ENCODE measurements at regions of chr1 and their contacts with region 1.

Region 1: GRCh38 chr1:27111626-27112573 is 43.0 kb downstream of the SLC9A1 start:
- DNase-seq: peak; percentile 47 to 78 (median 71)
- ATAC-seq: peak; percentile 95
- H3K4me3 ChIP-seq: peak overlapping the region; percentile 9
- H3K4me3 Mint-ChIP-seq: peak overlapping the region; percentile 53 to 78 (median 71)
- H3K27ac ChIP-seq: peak overlapping the region; percentile 65
- H3K27ac Mint-ChIP-seq: peak overlapping the region; percentile 77 to 97 (median 87)
- H3K4me1 ChIP-seq: peaks cover 17 to 44% of the 10 kb centered on the region in 2 donors
- H3K4me1 Mint-ChIP-seq: peaks cover 42 to 75% (median 65%) of the 10 kb centered on the region in 7 donors
- H3K27me3 ChIP-seq: no peaks in the 10 kb centered on the region
- H3K27me3 Mint-ChIP-seq: no peaks in the 10 kb centered on the region

Region 2: DNA sequence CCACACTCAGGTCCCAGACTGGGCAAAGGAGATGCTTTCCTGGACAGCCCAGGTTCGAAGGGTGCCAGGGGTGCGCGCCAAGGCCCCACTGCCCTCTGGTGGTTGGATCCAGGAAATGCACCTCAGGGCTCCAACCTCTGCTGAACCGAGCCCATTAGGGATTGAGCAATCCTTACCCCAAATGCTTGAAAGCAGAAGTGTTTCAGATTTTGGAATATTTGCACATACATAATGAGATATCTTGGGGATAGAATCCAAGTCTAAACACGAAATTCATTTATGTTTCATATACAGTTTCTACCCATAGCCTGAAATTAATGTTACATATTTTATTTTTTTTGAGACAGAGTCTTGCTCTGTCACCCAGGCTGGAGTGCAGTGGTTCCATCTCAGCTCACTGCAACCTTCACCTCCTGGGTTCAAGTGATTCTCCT is 14.4 kb before region 1 on chr1:
- CTCF ChIA-PET with region 1: interaction called, 24 read pairs
- POLR2A ChIA-PET with region 1: no interaction called
- intact Hi-C with region 1: no loop called
- DNase-seq: peak; percentile 49 to 79 (median 63)
- ATAC-seq: peak; percentile 83
- H3K4me3 ChIP-seq: no peak overlapping the region
- H3K4me3 Mint-ChIP-seq: no peak overlapping the region
- H3K27ac ChIP-seq: no peak overlapping the region
- H3K27ac Mint-ChIP-seq: no peak overlapping the region
- H3K4me1 ChIP-seq: no peaks in the 10 kb centered on the region
- H3K4me1 Mint-ChIP-seq: peaks cover 0 to 18% (median under 1%) of the 10 kb centered on the region in 7 donors
- H3K27me3 ChIP-seq: no peaks in the 10 kb centered on the region
- H3K27me3 Mint-ChIP-seq: no peaks in the 10 kb centered on the region

Region 3: GRCh38 chr1:27136998-27137542 is 25.2 kb after region 1 on chr1:
- CTCF ChIA-PET with region 1: interaction called, 12 read pairs
- POLR2A ChIA-PET with region 1: interaction called, 25 read pairs
- intact Hi-C with region 1: loop called (anchors 1 to 2 kb)
- DNase-seq: peak; percentile 57 to 85 (median 83)
- ATAC-seq: peak; percentile 90
- H3K4me3 ChIP-seq: peak overlapping the region; percentile 64
- H3K4me3 Mint-ChIP-seq: peak overlapping the region; percentile 76 to 97 (median 89)
- H3K27ac ChIP-seq: peak overlapping the region; percentile 87
- H3K27ac Mint-ChIP-seq: peak overlapping the region; percentile 98 to 100 (median 99)
- H3K4me1 ChIP-seq: peaks cover 25 to 34% of the 10 kb centered on the region in 2 donors
- H3K4me1 Mint-ChIP-seq: peaks cover 44 to 64% (median 58%) of the 10 kb centered on the region in 7 donors
- H3K27me3 ChIP-seq: no peaks in the 10 kb centered on the region
- H3K27me3 Mint-ChIP-seq: no peaks in the 10 kb centered on the region

Region 4: DNA sequence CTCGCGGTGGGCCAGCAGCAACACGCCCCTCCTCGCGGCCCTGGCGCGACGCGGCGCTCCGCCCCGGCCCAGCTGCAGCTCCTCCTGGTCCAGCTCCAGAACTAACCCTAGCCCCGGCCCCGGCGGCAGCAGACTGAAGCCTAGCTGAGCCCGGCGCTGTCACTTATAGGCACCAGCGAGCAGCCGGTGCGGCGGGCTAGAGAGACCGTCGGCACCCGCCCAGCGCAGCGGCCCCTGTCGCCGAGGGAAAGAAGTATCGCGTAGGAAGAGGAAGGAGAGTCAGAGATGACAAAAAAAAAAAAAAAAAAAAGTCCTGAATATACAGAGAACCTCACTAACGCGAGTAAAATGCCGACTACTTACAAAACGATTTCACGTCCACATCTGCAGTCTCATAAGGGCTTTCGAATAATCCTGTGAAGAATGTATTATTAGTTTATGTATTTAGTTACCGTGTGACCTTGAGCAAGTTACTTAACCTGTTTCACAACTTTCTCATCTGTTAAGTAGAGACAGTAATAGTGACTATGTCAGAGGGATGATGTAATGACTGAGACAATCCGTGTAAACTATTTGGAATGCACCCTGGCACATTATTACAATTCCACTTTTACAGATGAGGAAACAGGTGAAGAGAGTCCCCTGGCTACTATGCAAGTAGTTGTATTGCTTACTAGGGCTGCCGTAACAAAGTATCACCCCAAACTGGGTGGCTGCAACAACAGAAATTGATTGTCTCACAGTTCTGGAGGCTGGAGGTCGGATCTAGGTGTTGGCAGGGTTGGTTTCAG is 43.3 kb after region 1 on chr1 and contains the start of gene SLC9A1:
- CTCF ChIA-PET with region 1: interaction called, 16 read pairs
- POLR2A ChIA-PET with region 1: interaction called, 24 read pairs
- intact Hi-C with region 1: loop called (anchors 1 kb)
- DNase-seq: peak; percentile 90 to 96 (median 94)
- ATAC-seq: peak; percentile 98
- H3K4me3 ChIP-seq: peak within 1 kb of the TSS; percentile 40
- H3K4me3 Mint-ChIP-seq: peak within 1 kb of the TSS; percentile 82 to 97 (median 90)
- H3K27ac ChIP-seq: peak within 1 kb of the TSS; percentile 90
- H3K27ac Mint-ChIP-seq: peak within 1 kb of the TSS; percentile 96 to 100 (median 99)
- H3K4me1 ChIP-seq: peaks cover 29 to 36% of the 10 kb centered on the region in 2 donors
- H3K4me1 Mint-ChIP-seq: peaks cover 38 to 52% (median 49%) of the 10 kb centered on the region in 7 donors
- H3K27me3 ChIP-seq: no peaks in the 10 kb centered on the region
- H3K27me3 Mint-ChIP-seq: no peaks in the 10 kb centered on the region
- total RNA-seq, gene SLC9A1: 13.2 to 25.7 (median 21.1) TPM

Region 5: GRCh38 chr1:27161594-27161993 is 49.7 kb after region 1 on chr1:
- CTCF ChIA-PET with region 1: interaction called, 16 read pairs
- POLR2A ChIA-PET with region 1: interaction called, 9 read pairs
- intact Hi-C with region 1: loop called in 1 of 2 experiments (anchors 1 kb)
- DNase-seq: peak in 7 of 9 donors; percentile 34 to 76 (median 66)
- ATAC-seq: peak; percentile 81
- H3K4me3 ChIP-seq: no peak overlapping the region
- H3K4me3 Mint-ChIP-seq: peak overlapping the region; percentile 20 to 82 (median 48)
- H3K27ac ChIP-seq: peak overlapping the region; percentile 8
- H3K27ac Mint-ChIP-seq: peak overlapping the region; percentile 73 to 95 (median 81)
- H3K4me1 ChIP-seq: peaks cover 0 to 10% of the 10 kb centered on the region in 2 donors
- H3K4me1 Mint-ChIP-seq: peaks cover 9 to 16% (median 12%) of the 10 kb centered on the region in 7 donors
- H3K27me3 ChIP-seq: no peaks in the 10 kb centered on the region
- H3K27me3 Mint-ChIP-seq: no peaks in the 10 kb centered on the region

Region 6: DNA sequence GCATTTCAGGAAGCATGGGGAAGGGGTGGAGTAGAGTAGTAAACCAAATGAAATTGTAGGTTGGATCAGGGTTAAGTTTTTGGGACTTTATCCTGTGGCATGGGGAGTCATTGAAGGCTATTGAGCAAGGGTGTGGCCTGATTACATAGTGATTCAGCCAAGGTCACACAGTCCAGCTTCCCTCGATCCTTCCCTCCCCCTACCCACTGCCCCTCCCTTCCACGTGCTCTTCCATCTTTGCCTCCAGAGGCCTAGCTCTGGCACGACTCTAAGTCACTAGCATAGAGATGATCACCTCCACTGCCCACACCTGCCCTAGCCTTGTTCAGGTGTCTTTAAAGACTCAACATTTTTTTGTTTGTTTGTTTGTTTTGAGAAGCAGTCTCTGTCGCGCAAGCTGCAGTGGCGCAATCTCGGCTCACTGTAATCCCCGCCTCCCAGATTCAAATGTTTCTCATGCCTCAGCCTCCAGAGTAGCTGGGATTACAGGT is 80.2 kb after region 1 on chr1:
- CTCF ChIA-PET with region 1: interaction called, 19 read pairs
- POLR2A ChIA-PET with region 1: no interaction called
- intact Hi-C with region 1: no loop called
- DNase-seq: no peak
- ATAC-seq: peak; percentile 61
- H3K4me3 ChIP-seq: no peak overlapping the region
- H3K4me3 Mint-ChIP-seq: peak overlapping the region in 1 of 10 donors; percentile 29
- H3K27ac ChIP-seq: no peak overlapping the region
- H3K27ac Mint-ChIP-seq: no peak overlapping the region
- H3K4me1 ChIP-seq: no peaks in the 10 kb centered on the region
- H3K4me1 Mint-ChIP-seq: no peaks in the 10 kb centered on the region
- H3K27me3 ChIP-seq: no peaks in the 10 kb centered on the region
- H3K27me3 Mint-ChIP-seq: peaks cover 0 to 9% (median 0%) of the 10 kb centered on the region in 5 donors

Region 7: DNA sequence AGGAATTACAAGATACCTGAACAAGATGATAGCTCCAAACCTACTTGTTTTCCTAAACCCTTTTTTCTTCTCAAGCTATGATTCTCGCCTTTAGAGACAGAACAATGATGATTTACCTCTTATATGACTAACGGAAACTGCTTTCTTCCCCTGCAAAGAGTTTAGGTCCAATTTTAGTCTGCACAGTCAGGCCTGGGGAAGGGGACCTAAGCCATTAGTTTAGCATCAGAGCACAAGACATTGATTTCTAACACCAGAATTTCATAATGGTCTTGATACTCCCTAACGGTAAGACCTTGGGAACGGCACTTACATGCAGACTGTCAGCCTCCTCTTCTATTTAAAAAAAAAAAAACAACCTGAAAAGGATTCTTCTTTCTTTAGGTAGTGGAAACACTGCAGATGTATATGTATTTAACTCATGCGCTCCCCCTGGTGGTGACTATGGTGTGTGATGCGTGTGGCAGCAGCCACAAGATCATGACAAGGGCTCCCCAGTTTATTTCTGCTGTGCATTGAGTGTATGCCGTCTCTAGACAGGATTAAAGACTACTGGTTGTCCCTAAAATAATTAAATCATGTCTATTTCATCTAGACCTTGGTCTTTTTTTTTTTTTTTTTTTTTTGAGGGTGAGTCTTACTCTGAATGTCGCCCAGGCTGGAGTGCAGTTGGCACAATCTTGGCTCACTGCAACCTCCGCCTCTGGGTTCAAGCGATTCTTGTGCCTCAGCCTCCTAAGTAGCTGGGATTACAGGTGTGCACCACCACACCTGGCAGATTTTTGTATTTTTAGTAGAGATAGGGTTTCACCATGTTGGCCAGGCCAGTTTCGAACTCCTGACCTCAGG is 172.7 kb after region 1 on chr1:
- CTCF ChIA-PET with region 1: interaction called, 35 read pairs
- POLR2A ChIA-PET with region 1: interaction called, 3 read pairs
- intact Hi-C with region 1: loop called in 1 of 2 experiments (anchors 1 kb)
- DNase-seq: peak; percentile 70 to 88 (median 85)
- ATAC-seq: peak; percentile 96
- H3K4me3 ChIP-seq: no peak overlapping the region
- H3K4me3 Mint-ChIP-seq: no peak overlapping the region
- H3K27ac ChIP-seq: no peak overlapping the region
- H3K27ac Mint-ChIP-seq: peak overlapping the region in 5 of 9 donors; percentile 14 to 72 (median 57)
- H3K4me1 ChIP-seq: no peaks in the 10 kb centered on the region
- H3K4me1 Mint-ChIP-seq: peaks cover 0 to 12% (median 3%) of the 10 kb centered on the region in 7 donors
- H3K27me3 ChIP-seq: no peaks in the 10 kb centered on the region
- H3K27me3 Mint-ChIP-seq: no peaks in the 10 kb centered on the region

Measured in naive thymus-derived CD4-positive, alpha-beta T cell (primary cell).